ENCODE measurements at regions of chr12 and their contacts with region 1.

Region 1: GRCh38 chr12:131132118-131132892 is 178.6 kb downstream of the ADGRD1 start:
- DNase-seq: peak; percentile 81

Region 2: GRCh38 chr12:130916251-130916911 is 215.9 kb before region 1 on chr12:
- CTCF ChIA-PET with region 1: interaction called, 14 read pairs
- POLR2A ChIA-PET with region 1: no interaction called
- DNase-seq: peak; percentile 80

Region 3: GRCh38 chr12:131104463-131105350 is 27.6 kb before region 1 on chr12:
- CTCF ChIA-PET with region 1: interaction called, 38 read pairs
- POLR2A ChIA-PET with region 1: no interaction called
- DNase-seq: peak; percentile 85

Region 4: GRCh38 chr12:131116391-131117117 is 15.8 kb before region 1 on chr12:
- CTCF ChIA-PET with region 1: interaction called, 14 read pairs
- POLR2A ChIA-PET with region 1: no interaction called
- DNase-seq: peak; percentile 48

Region 5: GRCh38 chr12:131152587-131152986 is 20.3 kb after region 1 on chr12:
- CTCF ChIA-PET with region 1: interaction called, 10 read pairs
- POLR2A ChIA-PET with region 1: no interaction called
- DNase-seq: no peak

Region 6: DNA sequence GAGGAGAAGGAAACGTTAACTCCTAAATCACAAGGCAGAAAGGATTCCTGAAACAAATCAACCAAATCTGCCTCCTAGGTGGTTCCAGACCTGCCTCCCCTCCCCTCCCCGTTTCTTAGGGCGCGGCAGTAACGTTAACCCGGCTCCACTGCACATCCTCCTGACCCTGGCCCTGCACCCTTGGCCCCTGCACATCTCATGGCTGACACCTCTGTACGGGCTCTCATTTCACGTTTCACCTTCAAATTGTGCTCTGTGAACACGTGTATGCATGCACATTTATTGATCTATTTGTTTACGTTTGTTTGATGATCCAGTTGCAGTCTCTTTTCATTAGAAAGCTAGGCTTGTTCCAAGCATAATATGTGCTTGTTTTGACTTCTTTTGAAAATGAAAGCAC is 179.5 kb after region 1 on chr12:
- CTCF ChIA-PET with region 1: no interaction called
- POLR2A ChIA-PET with region 1: no interaction called
- DNase-seq: no peak

Measured in HEK293T (cell line).